ENCODE measurements at regions of chr3 and their contacts with region 1.

Region 1: DNA sequence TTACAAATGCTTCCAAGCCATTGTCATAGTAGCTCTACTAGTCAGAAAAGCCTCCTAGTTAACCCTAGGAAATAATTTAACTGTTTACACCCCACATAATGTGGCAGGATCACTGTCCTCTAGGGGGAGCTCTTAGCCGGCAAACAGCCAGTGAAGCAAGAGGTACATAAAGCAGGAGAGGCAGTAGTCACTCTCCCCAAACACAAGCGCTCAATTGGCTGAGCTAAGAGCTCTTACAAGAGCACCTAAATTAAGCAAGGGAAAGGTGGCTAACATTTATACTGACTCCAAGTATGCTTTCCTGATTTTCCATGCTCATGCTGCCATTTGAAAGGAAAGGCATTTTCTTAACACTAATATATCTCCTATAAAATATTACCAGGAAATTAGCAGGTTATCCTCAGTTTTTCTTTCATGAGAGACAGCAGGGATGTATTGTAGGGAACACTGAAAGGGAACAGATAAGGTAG is 37.6 kb downstream of the NCEH1 start:
- DNase-seq: peak; percentile 83
- ATAC-seq: peak; percentile 80
- H3K4me3 Mint-ChIP-seq: no peak overlapping the region
- H3K27ac Mint-ChIP-seq: no peak overlapping the region
- H3K4me1 Mint-ChIP-seq: peaks cover 30% of the 10 kb centered on the region
- H3K27me3 Mint-ChIP-seq: no peaks in the 10 kb centered on the region
- CTCF ChIP-seq: peak; percentile 84

Region 2: DNA sequence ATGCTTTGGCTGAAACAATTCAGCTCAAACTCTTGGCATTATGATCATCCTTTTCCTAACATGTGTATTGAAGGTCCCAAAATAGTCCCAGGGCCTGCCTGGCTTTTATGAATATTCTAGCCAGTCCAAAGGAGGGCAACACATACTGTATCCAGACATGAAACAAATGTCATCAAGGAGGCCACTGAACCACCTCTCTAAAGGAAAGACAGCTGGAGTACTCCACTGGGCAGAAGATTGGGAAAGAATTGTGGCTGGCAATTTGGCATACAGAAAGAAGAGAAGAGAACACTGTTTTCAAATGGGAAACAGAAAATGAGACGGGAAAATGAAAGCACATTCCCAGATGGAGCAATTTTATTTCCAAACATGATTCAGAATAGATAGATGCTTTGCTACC is 42.9 kb before region 1 on chr3:
- CTCF ChIA-PET with region 1: no interaction called
- POLR2A ChIA-PET with region 1: no interaction called
- DNase-seq: no peak
- ATAC-seq: no peak
- H3K4me3 Mint-ChIP-seq: no peak overlapping the region
- H3K27ac Mint-ChIP-seq: no peak overlapping the region
- H3K4me1 Mint-ChIP-seq: no peaks in the 10 kb centered on the region
- H3K27me3 Mint-ChIP-seq: no peaks in the 10 kb centered on the region
- CTCF ChIP-seq: no peak

Region 3: DNA sequence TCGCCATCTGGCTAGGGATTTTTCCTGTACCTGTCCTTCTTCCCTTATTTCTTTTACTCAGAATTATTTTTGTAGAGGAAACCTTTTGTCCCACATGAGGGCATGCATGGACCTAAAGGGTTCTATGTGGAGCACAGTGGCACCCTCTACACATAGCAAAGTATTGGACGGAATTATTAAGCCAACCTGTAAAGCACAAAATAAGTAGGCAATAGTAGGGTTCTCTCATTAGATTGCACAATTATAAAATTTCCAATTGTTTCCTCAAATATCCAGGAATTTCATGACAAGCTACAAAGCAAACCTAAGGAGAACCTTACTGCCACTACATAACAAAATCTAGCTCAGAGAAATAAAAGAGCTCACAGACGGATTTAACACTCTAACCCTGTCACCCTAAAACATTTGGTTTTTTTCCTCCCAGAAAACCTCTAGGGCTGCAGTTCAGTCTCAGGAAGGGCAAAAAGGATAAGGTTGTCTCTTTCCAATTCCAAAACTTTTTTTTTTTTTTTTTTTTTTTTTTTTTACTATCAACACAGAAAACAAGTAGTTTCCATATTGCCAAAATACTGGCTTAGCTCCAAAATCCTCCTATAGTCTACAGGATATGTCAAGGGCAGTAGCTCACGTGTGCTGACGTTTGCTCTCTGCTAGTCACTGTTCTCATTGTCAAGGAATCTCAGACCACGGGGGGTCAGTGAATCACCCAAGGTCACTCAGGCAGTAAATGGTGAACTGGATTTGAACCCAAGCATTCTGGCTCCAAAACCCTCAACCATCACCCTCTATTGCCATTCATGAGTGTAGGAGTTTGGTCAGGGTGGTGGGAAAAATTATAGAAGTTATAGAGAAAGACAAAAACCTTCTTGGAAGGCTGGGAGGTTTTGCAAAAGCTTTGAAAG is 14.7 kb before region 1 on chr3:
- CTCF ChIA-PET with region 1: interaction called, 14 read pairs
- POLR2A ChIA-PET with region 1: no interaction called
- DNase-seq: peak; percentile 17
- ATAC-seq: no peak; the same call in none of the 2 replicates
- H3K4me3 Mint-ChIP-seq: no peak overlapping the region
- H3K27ac Mint-ChIP-seq: 0 out of 2 replicates have a peak overlapping the region, but pooled peaks have one; percentile 28
- H3K4me1 Mint-ChIP-seq: peaks cover 6% of the 10 kb centered on the region
- H3K27me3 Mint-ChIP-seq: no peaks in the 10 kb centered on the region
- CTCF ChIP-seq: no peak

Region 4: DNA sequence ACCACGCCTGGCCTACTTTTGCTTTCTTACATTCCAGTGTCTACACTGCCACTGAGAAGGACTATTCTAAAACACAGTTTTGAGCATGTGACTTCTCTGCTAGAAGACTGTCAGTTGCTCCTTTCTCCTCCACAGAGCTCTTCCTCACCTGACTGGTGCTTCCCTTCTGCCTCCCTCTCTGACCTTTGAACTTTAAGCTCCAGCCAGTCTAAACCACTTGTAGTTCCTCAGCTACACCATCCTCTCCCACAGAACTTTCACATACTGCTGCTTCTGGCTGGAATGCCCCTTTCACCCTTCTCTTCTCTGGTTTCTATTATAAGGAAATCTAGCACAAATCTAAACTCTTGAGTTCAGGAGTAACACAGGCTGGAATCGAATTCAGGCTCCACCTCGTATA is 28.5 kb after region 1 on chr3:
- CTCF ChIA-PET with region 1: interaction called, 10 read pairs
- POLR2A ChIA-PET with region 1: no interaction called
- DNase-seq: no peak
- ATAC-seq: no peak
- H3K4me3 Mint-ChIP-seq: no peak overlapping the region
- H3K27ac Mint-ChIP-seq: no peak overlapping the region; the same call in 1 of the 2 replicates
- H3K4me1 Mint-ChIP-seq: peaks cover 17% of the 10 kb centered on the region
- H3K27me3 Mint-ChIP-seq: no peaks in the 10 kb centered on the region
- CTCF ChIP-seq: no peak

Region 5: DNA sequence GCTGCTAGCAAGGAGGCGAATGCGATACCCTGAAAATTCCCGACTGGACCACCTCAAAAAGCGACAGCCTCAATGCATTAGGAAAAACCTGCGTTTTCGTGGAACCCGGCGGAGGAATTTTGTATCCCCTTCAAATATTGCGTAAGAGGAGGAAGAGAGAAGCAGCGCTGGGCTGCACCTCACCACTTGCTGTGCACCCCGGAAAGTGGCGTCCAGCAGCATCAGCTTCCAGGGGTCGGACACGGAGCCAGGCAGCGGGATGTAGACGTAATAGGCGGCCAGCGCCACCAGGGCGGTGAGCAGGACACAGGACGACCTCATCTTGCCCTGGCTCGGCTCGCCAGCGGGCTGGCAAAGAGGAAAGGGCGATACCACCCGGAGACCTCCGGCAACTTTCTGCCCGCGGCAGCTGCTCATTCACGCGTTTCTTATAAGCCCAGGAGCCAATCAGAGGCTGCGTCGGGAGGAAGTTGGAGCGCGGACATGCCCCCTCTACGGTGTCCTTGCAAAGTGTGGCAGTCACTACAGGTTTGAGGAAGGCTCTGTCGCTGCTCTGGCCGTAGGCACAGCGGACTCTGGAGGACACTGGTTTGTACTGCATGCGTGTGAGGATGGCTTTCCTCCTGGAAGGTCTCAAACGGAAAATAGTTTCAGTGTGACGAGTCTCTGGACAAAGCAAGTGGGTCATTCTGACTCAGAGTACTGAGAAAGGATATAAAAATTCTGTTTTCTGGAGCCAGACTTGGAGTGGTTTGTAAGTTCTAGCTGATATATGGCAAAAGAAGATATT is 37.6 kb after region 1 on chr3 and contains the start of gene NCEH1:
- CTCF ChIA-PET with region 1: interaction called, 22 read pairs
- POLR2A ChIA-PET with region 1: no interaction called
- DNase-seq: peak; percentile 87
- ATAC-seq: peak; percentile 99
- H3K4me3 Mint-ChIP-seq: peak within 1 kb of the TSS; percentile 93
- H3K27ac Mint-ChIP-seq: peak within 1 kb of the TSS; percentile 82
- H3K4me1 Mint-ChIP-seq: peaks cover 14% of the 10 kb centered on the region
- H3K27me3 Mint-ChIP-seq: no peaks in the 10 kb centered on the region; the same call in 1 of the 2 replicates
- CTCF ChIP-seq: peak; percentile 21; the same call in 1 of the 2 replicates
- total RNA-seq, gene NCEH1: 2.6 to 4.5 TPM (median 3.3 TPM) in 3 replicates

Region 6: DNA sequence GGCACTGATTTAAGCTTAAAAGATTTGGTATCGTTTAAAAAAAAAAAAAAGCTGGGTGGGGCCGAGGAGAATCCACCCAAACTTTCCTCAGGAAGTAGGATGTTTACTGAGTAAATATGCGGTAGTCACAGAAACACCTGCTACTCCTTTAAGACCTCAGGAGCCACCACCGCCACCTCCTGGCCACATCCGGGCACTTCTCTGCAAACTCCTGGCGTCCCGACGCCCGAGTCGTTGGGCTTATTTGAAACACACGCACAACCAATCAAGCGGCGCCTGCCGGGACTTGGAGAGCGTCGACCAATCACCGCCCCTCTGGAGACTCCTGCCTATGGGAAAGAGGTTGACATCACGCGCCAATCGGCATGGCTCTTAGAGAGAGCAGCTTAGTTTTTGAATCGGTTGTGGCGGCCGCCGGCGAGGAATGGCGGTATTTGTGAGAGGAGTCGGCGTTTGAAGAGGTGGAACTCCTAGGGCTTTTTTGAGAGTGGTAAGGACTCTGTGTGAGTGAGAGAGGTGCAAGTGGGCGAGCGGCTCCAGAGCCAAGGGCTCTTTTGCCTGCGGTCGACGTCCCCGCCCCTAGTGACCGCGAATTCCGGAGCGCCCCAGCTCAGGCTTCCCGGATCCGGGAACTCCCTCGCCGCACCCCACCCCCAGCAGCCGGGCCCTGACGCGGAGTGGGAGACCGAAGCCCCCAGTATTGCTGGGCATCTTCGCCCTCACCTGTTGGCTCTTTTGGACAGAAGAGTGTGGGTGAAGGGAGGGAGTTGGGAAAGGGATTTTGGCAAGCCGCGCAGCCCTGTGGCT is 77.3 kb after region 1 on chr3 and contains the start of gene ECT2:
- CTCF ChIA-PET with region 1: interaction called, 27 read pairs
- POLR2A ChIA-PET with region 1: interaction called, 4 read pairs
- DNase-seq: peak; percentile 98
- ATAC-seq: peak; percentile 98
- H3K4me3 Mint-ChIP-seq: peak within 1 kb of the TSS; percentile 97
- H3K27ac Mint-ChIP-seq: peak within 1 kb of the TSS; percentile 99
- H3K4me1 Mint-ChIP-seq: peaks cover 46% of the 10 kb centered on the region
- H3K27me3 Mint-ChIP-seq: no peaks in the 10 kb centered on the region
- CTCF ChIP-seq: peak; percentile 42; the same call in 1 of the 2 replicates
- total RNA-seq, gene ECT2: 80.9 to 97.7 TPM (median 84.3 TPM) in 3 replicates